Sciatic nerve (tissue), 2 donors: ENCODE measurements at regions of chr1 and their contacts with region 1.

Region 1: DNA sequence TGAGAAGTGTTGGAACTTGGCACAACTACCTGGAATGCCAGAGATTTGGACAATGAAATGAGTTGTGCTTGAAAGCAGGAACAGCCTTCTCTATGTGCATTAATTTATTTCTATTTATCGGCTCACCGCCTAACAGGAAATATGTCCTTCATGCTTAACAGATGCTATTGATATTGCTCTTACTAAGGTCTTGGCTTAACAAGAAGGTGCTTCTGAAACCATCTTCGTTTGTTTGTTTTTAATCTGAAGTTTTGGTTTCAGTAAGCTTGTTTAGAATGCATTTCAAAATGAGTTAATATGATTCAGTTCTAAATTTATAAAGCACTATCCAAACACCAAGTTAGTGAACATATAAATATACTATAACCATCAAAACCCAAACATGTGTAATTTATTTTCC is 898.3 kb upstream of the B3GALT2 start:
- DNase-seq: no peak
- ATAC-seq: no peak

Region 2: DNA sequence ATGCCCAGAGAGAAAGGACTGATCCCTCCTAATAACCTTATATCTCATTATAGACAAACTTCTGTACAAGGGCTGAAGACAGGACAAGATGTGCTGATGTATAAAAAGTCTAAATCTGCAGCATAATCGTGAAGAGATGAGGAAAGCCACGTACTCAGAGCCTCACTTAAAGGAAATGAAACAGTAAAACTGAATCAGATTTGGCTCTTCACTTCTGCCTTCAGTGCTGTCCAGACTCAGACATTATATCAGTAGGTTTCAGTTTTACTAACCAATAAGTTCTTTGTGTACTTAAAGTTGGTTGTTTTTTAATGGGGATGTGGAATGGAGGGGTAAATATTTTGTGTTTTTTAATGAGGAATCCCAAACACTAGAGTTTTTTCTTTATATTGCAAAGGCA is 1554.5 kb before region 1 on chr1:
- intact Hi-C with region 1: loop called (anchors 5 kb)
- DNase-seq: no peak
- ATAC-seq: peak; percentile 84

Region 3: DNA sequence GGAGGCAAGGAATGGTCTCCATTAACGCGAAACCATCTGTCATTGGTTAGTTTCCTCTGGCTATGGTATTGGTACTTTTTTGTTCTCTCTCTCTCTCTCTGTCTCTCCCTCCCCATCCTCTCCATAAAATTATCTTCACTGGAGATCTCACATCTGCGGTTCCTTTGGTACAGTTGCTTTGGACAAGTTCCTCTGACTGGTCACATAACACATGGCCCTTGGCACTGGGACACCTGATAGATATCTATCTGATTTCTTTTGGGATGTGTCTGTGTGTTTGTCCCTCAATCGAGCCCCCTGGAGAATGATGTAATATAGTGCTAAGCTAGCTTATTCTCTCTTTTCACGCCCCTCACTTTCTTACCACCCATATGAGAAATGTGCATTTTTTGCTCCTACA is 216.3 kb before region 1 on chr1:
- intact Hi-C with region 1: no loop called
- DNase-seq: no peak
- ATAC-seq: no peak

Region 4: GRCh38 chr1:194289569-194290266 is 205.0 kb after region 1 on chr1:
- intact Hi-C with region 1: no loop called
- DNase-seq: no peak
- ATAC-seq: no peak